Esophagus squamous epithelium (tissue), 5 donors: ENCODE measurements at regions of chr17 and their contacts with region 1.

Region 1: GRCh38 chr17:72004611-72005331 is 116.0 kb upstream of the SOX9 start:
- DNase-seq: no peak
- H3K4me3 ChIP-seq: no peak overlapping the region
- H3K27ac ChIP-seq: no peak overlapping the region
- H3K4me1 ChIP-seq: no peaks in the 10 kb centered on the region
- H3K27me3 ChIP-seq: no peaks in the 10 kb centered on the region
- CTCF ChIP-seq: no peak
- POLR2A ChIP-seq: no peak

Region 2: GRCh38 chr17:71959154-71959553 is 45.6 kb before region 1 on chr17:
- intact Hi-C with region 1: loop called (anchors 10 kb)
- DNase-seq: no peak
- H3K4me3 ChIP-seq: no peak overlapping the region
- H3K27ac ChIP-seq: no peak overlapping the region
- H3K4me1 ChIP-seq: no peaks in the 10 kb centered on the region
- H3K27me3 ChIP-seq: no peaks in the 10 kb centered on the region
- CTCF ChIP-seq: peak in 4 of 6 experiments; percentile 25 to 60 (median 31)
- POLR2A ChIP-seq: no peak

Region 3: DNA sequence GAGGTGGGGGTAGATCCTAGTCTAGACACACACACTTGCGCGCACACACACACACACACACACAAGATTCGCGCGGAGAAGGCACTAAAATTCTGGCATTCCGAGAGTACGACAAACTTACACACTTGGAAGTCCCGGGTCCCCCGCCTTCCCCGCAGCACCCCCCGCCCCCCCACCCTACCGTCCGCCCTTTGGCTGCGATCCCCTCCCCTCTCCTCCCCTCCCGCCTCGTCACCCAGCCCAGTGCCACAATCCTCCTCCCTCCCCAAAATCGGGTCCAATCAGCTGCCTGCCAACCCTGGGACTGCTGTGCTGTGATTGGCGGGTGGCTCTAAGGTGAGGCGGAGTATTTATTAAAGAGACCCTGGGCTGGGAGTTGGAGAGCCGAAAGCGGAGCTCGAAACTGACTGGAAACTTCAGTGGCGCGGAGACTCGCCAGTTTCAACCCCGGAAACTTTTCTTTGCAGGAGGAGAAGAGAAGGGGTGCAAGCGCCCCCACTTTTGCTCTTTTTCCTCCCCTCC is 115.9 kb after region 1 on chr17 and contains the start of gene SOX9:
- intact Hi-C with region 1: no loop called
- DNase-seq: no peak
- H3K4me3 ChIP-seq: peak within 1 kb of the TSS; percentile 60 to 70 (median 66)
- H3K27ac ChIP-seq: peak within 1 kb of the TSS; percentile 59 to 90 (median 85)
- H3K4me1 ChIP-seq: peaks cover 17 to 82% (median 19%) of the 10 kb centered on the region in 3 donors
- H3K27me3 ChIP-seq: peaks cover 9 to 96% (median 17%) of the 10 kb centered on the region in 4 donors
- CTCF ChIP-seq: no peak
- POLR2A ChIP-seq: peak in 3 of 4 donors; percentile 23 to 79 (median 67)
- total RNA-seq, gene SOX9: 7.4 to 11.5 (median 11.1) TPM